ENCODE measurements at regions of chr10 and their contacts with region 1.

Region 1: GRCh38 chr10:101569838-101570766 is 18.0 kb downstream of the POLL start:
- DNase-seq: peak; percentile 66 to 84
- H3K4me3 ChIP-seq: peak overlapping the region; percentile 58
- H3K4me3 Mint-ChIP-seq: peak overlapping the region; percentile 81
- H3K27ac Mint-ChIP-seq: no peak overlapping the region
- H3K4me1 ChIP-seq: peaks cover 6% of the 10 kb centered on the region; the same call in 1 of the 2 replicates
- H3K4me1 Mint-ChIP-seq: no peaks in the 10 kb centered on the region
- H3K27me3 ChIP-seq: no peaks in the 10 kb centered on the region
- H3K27me3 Mint-ChIP-seq: peaks cover 7% of the 10 kb centered on the region
- CTCF ChIP-seq: peak; percentile 81 to 96

Region 2: DNA sequence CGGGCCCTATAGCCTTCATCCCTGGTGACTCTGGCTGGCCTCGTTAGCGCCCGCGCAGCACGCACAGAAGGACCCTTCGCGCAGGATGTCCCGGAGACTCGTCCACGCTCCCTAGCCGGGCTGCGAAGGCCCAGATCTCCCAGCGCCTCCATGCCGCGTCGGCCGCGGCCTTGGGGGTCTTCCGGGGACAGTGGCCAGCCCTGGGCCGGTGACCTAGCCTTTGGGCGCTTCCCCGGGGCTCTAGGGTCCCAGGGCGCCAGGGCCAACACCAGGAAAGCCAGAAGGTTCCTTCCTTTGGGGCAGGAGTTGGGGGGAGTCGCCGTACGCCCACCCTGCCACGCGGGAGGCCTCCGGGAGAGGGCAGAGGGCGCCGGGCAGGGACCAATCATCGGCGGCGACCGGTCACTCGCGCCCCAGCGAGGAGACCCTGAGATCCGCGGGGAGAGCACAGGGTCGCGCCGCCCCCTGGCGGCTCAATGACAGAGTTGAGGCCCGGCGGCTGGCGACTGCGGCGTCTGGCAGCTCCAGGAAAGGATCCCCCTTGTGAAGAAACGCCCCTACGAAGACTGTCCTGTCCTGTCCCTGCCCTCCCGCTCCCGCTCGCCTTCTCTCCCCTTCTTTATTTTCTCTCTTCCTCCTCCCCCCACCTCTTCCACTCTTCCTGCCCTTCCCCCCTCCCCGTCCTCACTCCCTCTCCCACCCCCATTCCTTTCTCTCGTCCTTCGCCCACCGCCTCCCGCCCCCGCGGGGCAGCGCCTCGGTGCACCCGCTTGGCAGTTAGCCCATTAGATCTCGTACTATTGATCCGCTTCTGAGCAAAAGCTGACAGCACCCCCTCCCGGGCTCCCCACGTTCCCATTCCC is 278.5 kb before region 1 on chr10:
- CTCF ChIA-PET with region 1: no interaction called
- POLR2A ChIA-PET with region 1: no interaction called
- intact Hi-C with region 1: loop called (anchors 1 kb)
- DNase-seq: peak; percentile 67 to 73
- H3K4me3 ChIP-seq: peak overlapping the region; percentile 45
- H3K4me3 Mint-ChIP-seq: peak overlapping the region; percentile 69
- H3K27ac Mint-ChIP-seq: no peak overlapping the region
- H3K4me1 ChIP-seq: peaks cover 4% of the 10 kb centered on the region; the same call in 1 of the 2 replicates
- H3K4me1 Mint-ChIP-seq: no peaks in the 10 kb centered on the region
- H3K27me3 ChIP-seq: peaks cover 5% of the 10 kb centered on the region
- H3K27me3 Mint-ChIP-seq: peaks cover 22% of the 10 kb centered on the region
- CTCF ChIP-seq: peak; percentile 85 to 92

Region 3: GRCh38 chr10:101441541-101442455 is 128.3 kb before region 1 on chr10:
- CTCF ChIA-PET with region 1: interaction called, 8 read pairs
- POLR2A ChIA-PET with region 1: no interaction called
- intact Hi-C with region 1: loop called (anchors 1 kb)
- DNase-seq: peak; percentile 53 to 68
- H3K4me3 ChIP-seq: no peak overlapping the region
- H3K4me3 Mint-ChIP-seq: no peak overlapping the region
- H3K27ac Mint-ChIP-seq: no peak overlapping the region
- H3K4me1 ChIP-seq: no peaks in the 10 kb centered on the region
- H3K4me1 Mint-ChIP-seq: no peaks in the 10 kb centered on the region
- H3K27me3 ChIP-seq: no peaks in the 10 kb centered on the region
- H3K27me3 Mint-ChIP-seq: no peaks in the 10 kb centered on the region
- CTCF ChIP-seq: peak in 1 of 2 experiments; percentile 76

Region 4: DNA sequence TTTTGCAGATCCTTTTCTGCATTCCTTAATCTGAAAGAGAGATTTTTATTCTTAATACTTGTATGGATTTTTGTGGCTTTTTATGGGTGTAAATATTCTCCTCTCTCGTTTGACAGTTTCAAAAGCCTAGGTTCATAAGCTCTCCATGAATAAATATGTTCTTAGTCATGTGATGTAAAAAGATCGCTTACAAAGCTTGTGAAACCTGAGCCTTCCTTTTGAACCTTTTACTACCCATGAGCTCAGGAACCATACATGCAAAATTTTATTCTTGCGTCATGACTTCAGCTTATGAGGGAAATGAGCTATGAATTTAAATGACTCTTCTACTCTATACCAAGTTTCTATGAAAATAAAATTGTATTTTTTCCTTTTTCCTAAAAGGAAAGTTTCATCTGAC is 80.7 kb before region 1 on chr10:
- CTCF ChIA-PET with region 1: interaction called, 11 read pairs
- POLR2A ChIA-PET with region 1: no interaction called
- intact Hi-C with region 1: no loop called
- DNase-seq: no peak
- H3K4me3 ChIP-seq: no peak overlapping the region
- H3K4me3 Mint-ChIP-seq: no peak overlapping the region
- H3K27ac Mint-ChIP-seq: no peak overlapping the region
- H3K4me1 ChIP-seq: peaks cover 10% of the 10 kb centered on the region; the same call in 1 of the 2 replicates
- H3K4me1 Mint-ChIP-seq: peaks cover 6% of the 10 kb centered on the region
- H3K27me3 ChIP-seq: no peaks in the 10 kb centered on the region
- H3K27me3 Mint-ChIP-seq: no peaks in the 10 kb centered on the region
- CTCF ChIP-seq: no peak

Region 5: GRCh38 chr10:101512738-101513137 is 57.4 kb before region 1 on chr10:
- CTCF ChIA-PET with region 1: no interaction called
- POLR2A ChIA-PET with region 1: no interaction called
- intact Hi-C with region 1: no loop called
- DNase-seq: no peak
- H3K4me3 ChIP-seq: no peak overlapping the region
- H3K4me3 Mint-ChIP-seq: no peak overlapping the region
- H3K27ac Mint-ChIP-seq: no peak overlapping the region
- H3K4me1 ChIP-seq: no peaks in the 10 kb centered on the region
- H3K4me1 Mint-ChIP-seq: no peaks in the 10 kb centered on the region
- H3K27me3 ChIP-seq: no peaks in the 10 kb centered on the region
- H3K27me3 Mint-ChIP-seq: no peaks in the 10 kb centered on the region
- CTCF ChIP-seq: no peak

Region 6: DNA sequence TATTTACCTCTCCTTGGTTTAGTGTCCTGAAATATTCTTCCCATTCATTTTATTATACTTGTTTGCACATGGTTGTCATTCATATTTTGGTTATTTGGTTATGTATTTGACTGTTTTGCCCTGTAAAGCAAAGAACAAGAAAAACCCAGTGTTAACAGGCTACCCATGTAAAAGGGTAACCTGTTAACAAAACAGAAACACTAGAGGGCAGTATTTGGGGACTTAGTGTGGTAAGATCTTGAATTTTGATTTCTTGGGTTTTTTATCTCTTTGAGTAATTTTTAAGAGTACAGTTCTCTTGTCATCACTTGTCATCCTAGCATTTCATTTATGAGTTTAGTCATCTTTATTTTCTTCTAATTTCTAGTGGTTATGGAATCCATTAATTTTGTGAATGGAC is 33.3 kb before region 1 on chr10:
- CTCF ChIA-PET with region 1: interaction called, 5 read pairs
- POLR2A ChIA-PET with region 1: no interaction called
- intact Hi-C with region 1: loop called (anchors 2 kb)
- DNase-seq: no peak
- H3K4me3 ChIP-seq: no peak overlapping the region
- H3K4me3 Mint-ChIP-seq: no peak overlapping the region
- H3K27ac Mint-ChIP-seq: no peak overlapping the region
- H3K4me1 ChIP-seq: no peaks in the 10 kb centered on the region
- H3K4me1 Mint-ChIP-seq: no peaks in the 10 kb centered on the region
- H3K27me3 ChIP-seq: no peaks in the 10 kb centered on the region
- H3K27me3 Mint-ChIP-seq: no peaks in the 10 kb centered on the region
- CTCF ChIP-seq: peak; percentile 46 to 49